Activated T-helper 2 cell treated with anti-CD3 and anti-CD28 coated beads, Interferon-gamma antibody, Interleukin-2, Interleukin-4, amounts not matched to agents 10 μg/mL and 5 μg/mL and 100 μg/mL, durations not matched to agents 14 hours and 24 hours and 36 hours (primary cell): ENCODE measurements at regions of chr11 and their contacts with region 1.

Region 1: DNA sequence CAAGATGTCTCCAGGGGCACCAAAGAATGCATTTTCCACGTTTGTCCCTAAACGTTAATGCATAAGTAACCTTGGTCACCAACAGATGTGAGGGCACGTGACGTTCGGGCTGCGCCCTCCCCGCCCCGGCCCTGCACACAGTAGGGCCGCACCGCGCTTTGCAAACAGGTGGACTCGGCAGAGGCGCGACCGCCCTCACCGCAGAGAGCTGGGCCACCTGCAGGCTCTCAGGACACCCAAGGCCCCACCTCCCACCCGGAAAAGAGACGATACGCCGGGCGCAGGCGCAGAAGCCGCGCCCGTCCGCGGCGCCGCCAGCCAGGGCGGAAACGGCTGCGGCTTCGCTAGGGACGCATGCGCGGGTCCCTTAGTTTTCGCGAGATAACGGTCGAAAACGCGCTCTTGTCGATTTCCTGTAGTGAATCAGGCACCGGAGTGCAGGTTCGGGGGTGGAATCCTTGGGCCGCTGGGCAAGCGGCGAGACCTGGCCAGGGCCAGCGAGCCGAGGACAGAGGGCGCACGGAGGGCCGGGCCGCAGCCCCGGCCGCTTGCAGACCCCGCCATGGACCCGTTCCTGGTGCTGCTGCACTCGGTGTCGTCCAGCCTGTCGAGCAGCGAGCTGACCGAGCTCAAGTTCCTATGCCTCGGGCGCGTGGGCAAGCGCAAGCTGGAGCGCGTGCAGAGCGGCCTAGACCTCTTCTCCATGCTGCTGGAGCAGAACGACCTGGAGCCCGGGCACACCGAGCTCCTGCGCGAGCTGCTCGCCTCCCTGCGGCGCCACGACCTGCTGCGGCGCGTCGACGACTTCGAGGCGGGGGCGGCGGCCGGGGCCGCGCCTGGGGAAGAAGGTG is at the start of gene FADD:
- DNase-seq: peak; percentile 87
- H3K4me3 Mint-ChIP-seq: peak within 1 kb of the TSS; percentile 98
- H3K27ac Mint-ChIP-seq: peak within 1 kb of the TSS; percentile 99
- H3K4me1 Mint-ChIP-seq: peaks cover 26% of the 10 kb centered on the region
- H3K27me3 Mint-ChIP-seq: peaks cover 6% of the 10 kb centered on the region
- total RNA-seq, gene FADD: 43.0 and 44.3 TPM in 2 replicates

Region 2: GRCh38 chr11:69674267-69674906 is 528.7 kb before region 1 on chr11:
- intact Hi-C with region 1: loop called (anchors 2 kb)
- DNase-seq: no peak
- H3K4me3 Mint-ChIP-seq: peak overlapping the region; percentile 96
- H3K27ac Mint-ChIP-seq: peak overlapping the region; percentile 83
- H3K4me1 Mint-ChIP-seq: peaks cover 21% of the 10 kb centered on the region
- H3K27me3 Mint-ChIP-seq: peaks cover 8% of the 10 kb centered on the region

Region 3: DNA sequence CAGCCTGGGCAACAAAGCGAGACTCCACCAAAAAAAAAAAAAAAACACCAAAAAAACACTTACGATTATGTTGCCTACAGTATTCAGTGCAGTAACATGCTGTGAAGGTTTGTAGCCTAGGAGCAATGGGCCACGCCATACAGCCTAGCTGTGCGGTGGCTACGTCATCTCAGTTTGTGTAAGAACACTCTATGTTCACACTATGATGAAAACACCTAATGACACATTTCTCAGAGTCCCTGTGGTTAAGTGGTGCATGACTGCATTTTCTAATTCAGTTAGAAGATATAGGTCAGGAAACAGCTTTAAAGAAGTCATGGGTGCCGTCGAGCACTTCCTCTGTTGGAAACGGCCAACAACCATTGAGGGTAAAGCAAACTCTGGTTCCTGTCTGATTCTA is 200.7 kb before region 1 on chr11:
- intact Hi-C with region 1: loop called (anchors 1 kb)
- DNase-seq: peak; percentile 50
- H3K4me3 Mint-ChIP-seq: no peak overlapping the region
- H3K27ac Mint-ChIP-seq: peak overlapping the region; percentile 75
- H3K4me1 Mint-ChIP-seq: peaks cover 19% of the 10 kb centered on the region
- H3K27me3 Mint-ChIP-seq: peaks cover 6% of the 10 kb centered on the region

Region 4: DNA sequence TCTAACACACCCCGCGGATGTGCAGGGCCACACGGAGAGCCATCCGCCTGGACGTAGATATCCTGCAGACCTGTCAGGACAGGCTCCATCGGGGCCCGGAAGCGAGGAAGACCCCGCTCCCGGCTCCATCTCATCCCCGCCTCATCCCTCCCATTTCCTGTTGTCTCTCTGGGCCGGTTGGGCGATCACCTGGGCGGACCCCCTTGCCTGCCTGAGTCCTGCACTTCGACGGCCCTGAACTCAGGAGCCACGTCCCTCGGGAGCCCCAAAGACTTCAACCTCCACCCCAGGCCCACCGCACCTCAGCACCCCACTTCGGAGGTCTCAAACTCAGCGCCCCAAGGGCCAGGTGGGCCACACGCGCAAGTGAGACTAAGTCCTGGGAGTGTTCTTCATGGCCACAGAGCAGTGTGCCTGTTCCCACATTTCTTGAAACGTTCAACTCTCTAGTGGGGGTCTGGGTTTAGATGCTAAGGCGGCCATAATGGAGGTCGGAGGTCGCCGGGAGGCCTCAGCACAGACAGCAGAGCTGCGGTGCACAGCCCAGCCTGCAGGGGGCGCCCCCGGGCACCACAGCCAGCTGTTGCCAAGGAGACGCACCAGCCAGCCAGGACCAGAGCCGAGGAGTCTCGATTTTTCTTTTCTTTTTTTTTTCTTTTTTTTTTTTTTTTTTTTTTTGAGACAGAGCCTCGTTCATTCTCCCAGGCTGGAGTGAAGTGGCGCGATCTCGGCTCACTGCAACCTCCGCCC is 26.0 kb before region 1 on chr11:
- intact Hi-C with region 1: no loop called
- DNase-seq: peak; percentile 35
- H3K4me3 Mint-ChIP-seq: no peak overlapping the region
- H3K27ac Mint-ChIP-seq: no peak overlapping the region
- H3K4me1 Mint-ChIP-seq: no peaks in the 10 kb centered on the region
- H3K27me3 Mint-ChIP-seq: no peaks in the 10 kb centered on the region

Region 5: DNA sequence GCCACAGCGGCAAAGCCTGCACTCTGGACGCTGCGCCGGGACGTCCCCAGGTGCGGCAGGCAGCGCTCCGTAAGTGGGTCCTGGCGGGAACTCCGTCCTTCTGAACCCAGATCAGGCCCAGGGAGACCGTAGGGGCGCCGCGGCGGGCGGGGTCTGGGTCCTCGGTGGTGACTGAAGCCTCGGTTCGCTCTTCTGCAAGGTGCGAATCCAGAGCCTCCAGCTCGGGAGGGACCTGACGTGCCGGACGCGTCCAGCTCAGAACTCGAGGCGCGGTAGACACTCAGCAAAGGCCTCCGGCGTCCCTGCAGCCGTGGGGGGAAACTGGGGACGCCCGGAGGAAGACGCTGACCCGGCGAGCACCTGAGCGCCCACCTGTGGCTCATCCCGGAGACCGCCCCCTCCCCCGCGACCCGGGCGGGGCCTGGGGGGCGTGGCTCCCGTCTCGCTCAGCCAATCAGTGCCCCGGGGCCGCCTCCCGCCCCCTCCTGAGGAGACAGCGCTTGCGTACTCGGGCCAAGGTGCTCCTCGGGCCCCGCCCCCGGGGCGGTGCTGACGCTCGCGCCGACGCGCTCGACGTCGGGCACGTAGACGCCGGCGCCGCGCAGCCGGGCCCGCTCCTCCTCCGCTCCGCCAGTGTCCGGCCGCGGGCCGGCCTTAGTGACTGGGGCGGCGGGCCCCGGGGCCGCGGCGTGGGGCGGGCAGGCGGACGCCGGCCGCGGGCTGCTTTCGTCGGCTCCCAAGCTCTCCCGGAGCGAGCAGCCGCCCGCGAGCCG is 67.2 kb after region 1 on chr11 and contains the start of gene PPFIA1:
- intact Hi-C with region 1: loop called (anchors 2 kb)
- DNase-seq: peak; percentile 92
- H3K4me3 Mint-ChIP-seq: peak within 1 kb of the TSS; percentile 82
- H3K27ac Mint-ChIP-seq: peak within 1 kb of the TSS; percentile 88
- H3K4me1 Mint-ChIP-seq: peaks cover 26% of the 10 kb centered on the region
- H3K27me3 Mint-ChIP-seq: peaks cover 23% of the 10 kb centered on the region
- total RNA-seq, gene PPFIA1: 47.1 and 47.4 TPM in 2 replicates

Region 6: GRCh38 chr11:70397983-70398833 is 195.1 kb after region 1 on chr11 and contains the start of gene CTTN:
- intact Hi-C with region 1: loop called (anchors 10 kb)
- DNase-seq: peak; percentile 54
- H3K4me3 Mint-ChIP-seq: peak within 1 kb of the TSS; percentile 83
- H3K27ac Mint-ChIP-seq: peak within 1 kb of the TSS; percentile 54
- H3K4me1 Mint-ChIP-seq: peaks cover 28% of the 10 kb centered on the region
- H3K27me3 Mint-ChIP-seq: peaks cover 51% of the 10 kb centered on the region
- total RNA-seq, gene CTTN: 33.4 and 34.9 TPM in 2 replicates